Breast epithelium (tissue), 4 donors: ENCODE measurements at regions of chr9 and their contacts with region 1.

Region 1: DNA sequence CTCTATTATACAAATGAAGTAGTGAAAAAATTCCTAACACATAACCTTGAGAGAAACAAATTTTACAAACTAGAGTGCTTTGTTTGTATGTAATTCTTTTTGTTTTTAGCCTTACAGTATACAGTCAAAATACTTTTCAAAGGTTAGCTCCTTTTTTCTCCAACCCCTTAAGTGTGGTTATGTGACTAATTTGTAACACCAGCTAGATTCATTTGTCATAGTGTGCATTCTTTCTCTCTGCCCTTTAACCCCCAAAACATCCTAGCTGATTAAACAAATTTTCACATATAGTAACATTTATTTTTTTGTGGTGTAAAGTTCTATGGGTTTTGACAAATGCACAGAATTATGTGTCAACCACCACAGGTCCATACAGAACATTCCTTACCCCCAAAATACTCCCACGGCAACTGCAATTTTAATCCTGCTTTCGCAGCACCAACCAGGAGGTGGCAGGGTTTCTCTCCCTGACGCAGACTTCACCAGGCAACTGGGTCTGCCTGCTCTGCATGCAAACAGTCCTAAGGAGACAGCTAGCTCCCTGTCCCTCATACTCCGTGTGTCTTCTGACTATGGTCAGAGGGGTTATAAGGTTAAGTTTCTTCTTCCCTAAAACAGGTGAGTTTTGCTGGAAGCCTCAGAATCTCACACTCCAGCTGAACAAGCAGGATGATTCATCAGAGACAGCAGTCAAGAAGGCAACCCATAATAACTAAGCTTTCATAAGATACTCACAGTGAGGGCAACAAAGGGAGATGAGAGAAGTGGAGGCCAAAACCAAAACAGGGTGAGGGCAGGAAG is 44.5 kb upstream of the NR5A1 start:
- DNase-seq: no peak
- H3K4me3 ChIP-seq: no peak overlapping the region
- H3K27ac ChIP-seq: no peak overlapping the region
- H3K4me1 ChIP-seq: no peaks in the 10 kb centered on the region
- H3K27me3 ChIP-seq: no peaks in the 10 kb centered on the region
- CTCF ChIP-seq: peak; percentile 30 to 54 (median 47)
- POLR2A ChIP-seq: no peak

Region 2: GRCh38 chr9:124342776-124343485 is 208.7 kb before region 1 on chr9:
- intact Hi-C with region 1: loop called (anchors 10 kb)
- DNase-seq: peak in 1 of 2 donors; percentile 44
- H3K4me3 ChIP-seq: peak overlapping the region; percentile 10 to 46 (median 16)
- H3K27ac ChIP-seq: peak overlapping the region; percentile 55 to 79
- H3K4me1 ChIP-seq: no peaks in the 10 kb centered on the region
- H3K27me3 ChIP-seq: no peaks in the 10 kb centered on the region
- CTCF ChIP-seq: no peak
- POLR2A ChIP-seq: no peak

Region 3: DNA sequence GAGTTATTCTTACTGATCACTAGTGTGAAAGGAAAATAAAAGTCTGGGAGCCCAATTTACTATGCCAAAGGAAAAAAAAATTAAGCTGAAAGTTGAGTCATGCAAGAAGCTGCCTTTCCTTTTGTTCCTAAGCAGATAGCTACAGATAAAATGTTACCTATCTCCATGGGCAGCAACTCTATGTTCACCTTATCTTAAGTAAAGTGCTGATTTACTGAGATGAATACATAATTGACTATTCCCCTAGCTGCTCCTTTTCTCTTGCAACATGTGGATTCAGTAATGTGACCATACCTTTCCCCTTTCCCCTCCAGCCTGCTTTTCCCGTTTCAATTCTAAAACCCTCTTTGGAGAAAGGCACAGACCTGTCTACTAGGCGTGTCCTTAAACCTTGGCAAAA is 18.3 kb after region 1 on chr9:
- intact Hi-C with region 1: loop called (anchors 1 kb)
- DNase-seq: no peak
- H3K4me3 ChIP-seq: no peak overlapping the region
- H3K27ac ChIP-seq: no peak overlapping the region
- H3K4me1 ChIP-seq: no peaks in the 10 kb centered on the region
- H3K27me3 ChIP-seq: no peaks in the 10 kb centered on the region
- CTCF ChIP-seq: no peak
- POLR2A ChIP-seq: no peak

Region 4: GRCh38 chr9:124580186-124580585 is 28.5 kb after region 1 on chr9:
- intact Hi-C with region 1: no loop called
- DNase-seq: no peak
- H3K4me3 ChIP-seq: no peak overlapping the region
- H3K27ac ChIP-seq: no peak overlapping the region
- H3K4me1 ChIP-seq: no peaks in the 10 kb centered on the region
- H3K27me3 ChIP-seq: no peaks in the 10 kb centered on the region
- CTCF ChIP-seq: no peak
- POLR2A ChIP-seq: no peak